ENCODE measurements at regions of chr4 and their contacts with region 1.

Region 1: GRCh38 chr4:130636486-130636885 is 1540.5 kb downstream of the C4orf33 start:
- DNase-seq: no peak
- H3K4me3 ChIP-seq: no peak overlapping the region
- H3K27ac ChIP-seq: no peak overlapping the region
- H3K4me1 ChIP-seq: no peaks in the 10 kb centered on the region
- H3K27me3 ChIP-seq: no peaks in the 10 kb centered on the region
- CTCF ChIP-seq: no peak

Region 2: DNA sequence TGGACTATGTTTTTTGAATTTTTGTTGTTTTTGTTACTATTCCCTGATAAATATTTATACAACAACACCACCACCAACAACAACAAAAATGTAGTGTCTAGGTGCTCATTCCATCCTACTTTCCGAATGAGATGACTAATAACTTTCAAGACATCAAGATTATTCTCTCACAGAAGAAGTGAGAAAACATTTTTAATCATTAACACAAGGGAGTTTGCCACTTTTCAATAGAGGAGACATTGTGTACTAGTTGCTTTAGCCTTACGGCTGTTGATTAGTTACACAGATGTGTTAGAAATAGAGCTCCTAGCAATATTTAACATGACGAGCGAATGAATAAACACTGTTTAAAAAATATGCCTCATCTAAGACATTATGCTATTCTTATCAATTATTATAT is 641.8 kb before region 1 on chr4:
- CTCF ChIA-PET with region 1: no interaction called
- POLR2A ChIA-PET with region 1: interaction called, 10 read pairs
- intact Hi-C with region 1: no loop called
- DNase-seq: no peak
- H3K4me3 ChIP-seq: no peak overlapping the region
- H3K27ac ChIP-seq: no peak overlapping the region
- H3K4me1 ChIP-seq: no peaks in the 10 kb centered on the region
- H3K27me3 ChIP-seq: no peaks in the 10 kb centered on the region
- CTCF ChIP-seq: no peak